CD8-positive, alpha-beta T cell (primary cell): ENCODE measurements at regions of chr5 and their contacts with region 1.

Region 1: DNA sequence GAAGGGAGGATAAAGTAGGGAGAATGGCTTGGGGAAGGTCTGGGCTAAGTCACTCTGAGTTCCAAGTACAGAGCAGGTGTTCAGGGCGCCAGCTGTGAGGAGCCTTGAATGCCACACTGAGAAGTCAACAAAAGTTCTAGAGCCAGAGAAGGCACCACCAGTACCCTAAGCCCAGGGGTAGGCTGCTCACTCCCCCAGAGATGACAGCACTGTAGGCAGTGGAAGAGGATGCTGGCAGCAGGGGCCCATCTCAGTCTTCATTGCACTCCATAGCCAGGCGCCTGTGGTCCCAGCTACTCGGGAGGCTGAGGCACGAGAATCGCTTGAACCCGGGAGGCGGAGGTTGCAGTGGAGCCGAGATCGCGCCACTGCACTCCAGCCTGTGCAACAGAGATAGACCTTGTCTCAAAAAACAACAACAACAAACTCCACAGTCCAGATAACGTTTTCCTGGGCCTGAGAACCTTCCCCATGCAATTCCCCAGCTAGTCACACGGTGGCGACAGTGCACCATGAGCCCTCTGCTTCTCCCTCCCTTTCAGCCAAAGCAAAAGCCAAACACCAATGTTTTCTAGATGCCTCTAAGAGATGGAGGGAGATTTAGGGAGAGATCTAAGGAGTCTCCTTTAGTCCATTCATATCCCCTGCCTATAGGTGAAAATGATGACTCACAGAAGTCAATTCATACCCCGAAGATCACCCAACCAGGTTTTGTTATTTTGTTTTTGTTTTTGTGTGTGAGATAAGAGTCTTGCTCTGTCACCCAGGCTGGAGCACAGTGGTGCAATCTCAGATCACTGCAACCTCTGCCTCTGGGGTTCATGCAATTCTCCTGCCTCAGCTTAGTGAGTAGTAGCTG is 19.8 kb upstream of the NSD1 start:
- DNase-seq: peak; percentile 68 to 89 (median 79)
- ATAC-seq: peak; percentile 68
- H3K4me3 ChIP-seq: no peak overlapping the region
- H3K4me3 Mint-ChIP-seq: no peak overlapping the region
- H3K27ac ChIP-seq: no peak overlapping the region
- H3K27ac Mint-ChIP-seq: no peak overlapping the region
- H3K4me1 ChIP-seq: peaks cover 14% of the 10 kb centered on the region
- H3K4me1 Mint-ChIP-seq: peaks cover 16% of the 10 kb centered on the region
- H3K27me3 ChIP-seq: no peaks in the 10 kb centered on the region
- H3K27me3 Mint-ChIP-seq: no peaks in the 10 kb centered on the region
- CTCF ChIP-seq: peak; percentile 99

Region 2: GRCh38 chr5:176660860-176661641 is 452.7 kb before region 1 on chr5:
- CTCF ChIA-PET with region 1: interaction called, 17 read pairs
- POLR2A ChIA-PET with region 1: no interaction called
- intact Hi-C with region 1: loop called in 1 of 2 experiments (anchors 2 kb)
- DNase-seq: peak; percentile 51 to 88 (median 77)
- ATAC-seq: peak; percentile 75
- H3K4me3 ChIP-seq: no peak overlapping the region
- H3K4me3 Mint-ChIP-seq: peak overlapping the region; percentile 42
- H3K27ac ChIP-seq: no peak overlapping the region
- H3K27ac Mint-ChIP-seq: peak overlapping the region; percentile 70
- H3K4me1 ChIP-seq: peaks cover 27% of the 10 kb centered on the region
- H3K4me1 Mint-ChIP-seq: peaks cover 30% of the 10 kb centered on the region
- H3K27me3 ChIP-seq: no peaks in the 10 kb centered on the region
- H3K27me3 Mint-ChIP-seq: peaks cover 8% of the 10 kb centered on the region
- CTCF ChIP-seq: peak; percentile 98

Region 3: DNA sequence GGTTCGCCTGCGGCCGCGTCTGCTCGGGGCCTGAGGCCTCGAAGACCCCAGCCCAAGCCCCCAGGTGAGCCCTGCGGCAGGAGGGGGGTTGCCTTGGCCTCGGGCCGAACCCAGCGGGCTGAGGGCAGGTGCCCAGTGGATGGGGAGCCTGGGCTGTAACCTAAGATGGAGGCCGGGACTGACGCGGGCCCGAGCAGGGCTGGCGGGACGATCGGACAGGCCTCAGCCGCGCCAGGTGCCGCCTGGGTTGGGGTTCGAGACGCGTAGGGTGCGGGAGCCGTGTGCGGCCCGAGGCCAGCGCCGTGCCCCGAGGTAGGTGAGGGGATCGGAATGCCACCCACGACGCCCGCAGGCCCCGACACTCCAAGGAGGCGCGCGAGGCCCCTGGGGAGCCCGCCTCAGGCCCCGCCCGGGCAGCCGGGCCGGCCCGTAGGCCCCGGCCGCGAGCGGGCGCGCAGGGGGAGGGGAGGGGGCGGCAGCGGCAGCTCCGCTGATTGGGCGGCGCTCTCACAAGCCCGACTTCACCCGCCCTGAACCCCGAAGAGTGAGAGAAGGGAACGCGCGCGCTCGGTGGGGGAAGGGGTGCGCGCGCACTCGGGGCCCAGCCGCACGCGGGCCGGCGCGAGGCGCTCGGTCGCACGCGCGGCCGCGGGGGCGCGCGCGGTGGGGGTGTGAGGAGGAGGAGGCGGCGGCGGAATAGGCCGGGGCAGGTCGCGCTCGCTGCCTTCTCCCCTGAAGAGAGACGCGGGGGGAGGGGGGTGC is 19.5 kb after region 1 on chr5 and contains the start of gene NSD1:
- CTCF ChIA-PET with region 1: interaction called, 74 read pairs
- POLR2A ChIA-PET with region 1: interaction called, 10 read pairs
- intact Hi-C with region 1: loop called (anchors 1 kb)
- DNase-seq: peak; percentile 81 to 96 (median 89)
- ATAC-seq: peak; percentile 72
- H3K4me3 ChIP-seq: peak within 1 kb of the TSS; percentile 58 to 60
- H3K4me3 Mint-ChIP-seq: peak within 1 kb of the TSS; percentile 85
- H3K27ac ChIP-seq: peak within 1 kb of the TSS; percentile 64 to 85
- H3K27ac Mint-ChIP-seq: peak within 1 kb of the TSS; percentile 90
- H3K4me1 ChIP-seq: peaks cover 54% of the 10 kb centered on the region
- H3K4me1 Mint-ChIP-seq: peaks cover 55% of the 10 kb centered on the region
- H3K27me3 ChIP-seq: no peaks in the 10 kb centered on the region
- H3K27me3 Mint-ChIP-seq: no peaks in the 10 kb centered on the region
- CTCF ChIP-seq: no peak
- total RNA-seq, gene NSD1: 71.8 to 75.2 TPM

Region 4: GRCh38 chr5:177194274-177194673 is 80.5 kb after region 1 on chr5:
- CTCF ChIA-PET with region 1: interaction called, 14 read pairs
- POLR2A ChIA-PET with region 1: no interaction called
- intact Hi-C with region 1: loop called in 1 of 2 experiments (anchors 5 kb)
- DNase-seq: no peak
- ATAC-seq: no peak
- H3K4me3 ChIP-seq: no peak overlapping the region
- H3K4me3 Mint-ChIP-seq: no peak overlapping the region
- H3K27ac ChIP-seq: no peak overlapping the region
- H3K27ac Mint-ChIP-seq: no peak overlapping the region
- H3K4me1 ChIP-seq: no peaks in the 10 kb centered on the region
- H3K4me1 Mint-ChIP-seq: peaks cover 7% of the 10 kb centered on the region
- H3K27me3 ChIP-seq: no peaks in the 10 kb centered on the region
- H3K27me3 Mint-ChIP-seq: no peaks in the 10 kb centered on the region
- CTCF ChIP-seq: no peak

Region 5: DNA sequence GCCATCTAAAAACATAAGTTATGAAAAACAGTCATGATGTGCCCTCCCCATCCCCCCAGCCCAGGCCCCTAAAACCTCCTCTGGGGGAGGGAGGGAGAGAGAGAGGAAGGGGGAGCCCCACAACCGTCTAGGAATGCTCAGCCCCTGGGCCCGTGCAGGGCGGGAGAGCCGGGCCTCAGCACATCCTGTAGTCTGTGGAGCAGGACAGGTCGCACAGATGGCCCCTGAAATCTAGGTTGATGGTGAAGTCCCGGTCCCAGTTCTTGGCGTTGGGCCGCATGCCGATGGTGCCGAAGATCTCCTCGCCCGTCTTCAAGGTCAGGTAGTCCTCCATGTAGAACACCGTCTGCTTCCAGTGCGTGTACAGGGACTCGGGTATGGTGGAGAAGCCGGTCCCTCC is 151.6 kb after region 1 on chr5:
- CTCF ChIA-PET with region 1: interaction called, 14 read pairs
- POLR2A ChIA-PET with region 1: no interaction called
- intact Hi-C with region 1: loop called in 1 of 2 experiments (anchors 5 kb)
- DNase-seq: no peak
- ATAC-seq: no peak
- H3K4me3 ChIP-seq: no peak overlapping the region
- H3K4me3 Mint-ChIP-seq: no peak overlapping the region
- H3K27ac ChIP-seq: no peak overlapping the region
- H3K27ac Mint-ChIP-seq: no peak overlapping the region
- H3K4me1 ChIP-seq: no peaks in the 10 kb centered on the region
- H3K4me1 Mint-ChIP-seq: peaks cover 2% of the 10 kb centered on the region
- H3K27me3 ChIP-seq: no peaks in the 10 kb centered on the region
- H3K27me3 Mint-ChIP-seq: no peaks in the 10 kb centered on the region
- CTCF ChIP-seq: no peak

Region 6: GRCh38 chr5:177403792-177404640 is 290.2 kb after region 1 on chr5:
- CTCF ChIA-PET with region 1: no interaction called
- POLR2A ChIA-PET with region 1: no interaction called
- intact Hi-C with region 1: loop called in 1 of 2 experiments (anchors 1 kb)
- DNase-seq: peak; percentile 74 to 94 (median 85)
- ATAC-seq: peak; percentile 73
- H3K4me3 ChIP-seq: peak overlapping the region; percentile 52 to 72
- H3K4me3 Mint-ChIP-seq: peak overlapping the region; percentile 79
- H3K27ac ChIP-seq: peak overlapping the region in 1 of 2 experiments; percentile 59
- H3K27ac Mint-ChIP-seq: no peak overlapping the region
- H3K4me1 ChIP-seq: peaks cover 44% of the 10 kb centered on the region
- H3K4me1 Mint-ChIP-seq: peaks cover 38% of the 10 kb centered on the region
- H3K27me3 ChIP-seq: peaks cover 0 to 2% of the 10 kb centered on the region in 2 experiments
- H3K27me3 Mint-ChIP-seq: no peaks in the 10 kb centered on the region
- CTCF ChIP-seq: peak; percentile 52